Astrocyte of the cerebellum (primary cell): ENCODE measurements at regions of chr12 and their contacts with region 1.

Region 1: DNA sequence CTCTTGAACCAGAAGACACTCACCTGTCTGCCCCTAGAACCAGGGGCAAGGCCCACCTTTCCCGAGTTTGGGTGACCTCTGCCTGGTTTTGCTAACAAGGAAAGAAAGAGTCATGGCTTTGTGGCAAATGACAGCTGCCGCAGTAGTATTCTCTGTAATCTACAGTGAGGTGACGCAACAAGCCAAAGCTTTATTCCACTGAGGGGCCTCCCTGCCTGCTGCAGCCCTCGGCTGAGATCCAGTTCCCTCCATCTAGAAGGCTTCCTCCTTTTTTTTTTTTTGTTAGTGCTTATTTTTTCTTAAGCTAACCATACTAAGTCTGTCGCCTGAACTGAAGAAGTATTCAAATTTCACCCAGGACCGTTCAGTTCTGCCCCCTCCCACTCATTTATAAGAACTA is 142.3 kb upstream of the TMCC3 start:
- DNase-seq: no peak
- H3K4me3 ChIP-seq: no peak overlapping the region
- CTCF ChIP-seq: no peak

Region 2: DNA sequence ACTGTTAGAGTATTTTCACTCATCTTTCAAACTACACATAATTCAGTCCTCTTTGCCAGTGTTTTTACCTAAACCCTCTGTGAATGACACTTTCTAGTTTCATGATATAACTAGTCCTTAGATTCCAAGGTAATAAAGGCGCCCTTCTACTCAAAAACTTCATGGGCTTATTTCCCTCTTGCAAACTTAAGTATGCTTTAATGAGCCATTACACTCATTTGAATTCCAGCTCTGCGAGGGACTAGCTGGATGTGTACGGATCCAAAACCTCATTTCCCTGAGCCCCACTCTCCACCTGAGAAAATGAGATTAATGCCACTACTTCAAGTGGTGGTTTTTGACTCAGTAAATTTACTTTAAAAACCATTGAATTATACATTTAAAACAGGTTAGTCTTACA is 69.7 kb after region 1 on chr12:
- in situ Hi-C with region 1: no loop called
- DNase-seq: no peak
- H3K4me3 ChIP-seq: no peak overlapping the region
- CTCF ChIP-seq: no peak

Region 3: DNA sequence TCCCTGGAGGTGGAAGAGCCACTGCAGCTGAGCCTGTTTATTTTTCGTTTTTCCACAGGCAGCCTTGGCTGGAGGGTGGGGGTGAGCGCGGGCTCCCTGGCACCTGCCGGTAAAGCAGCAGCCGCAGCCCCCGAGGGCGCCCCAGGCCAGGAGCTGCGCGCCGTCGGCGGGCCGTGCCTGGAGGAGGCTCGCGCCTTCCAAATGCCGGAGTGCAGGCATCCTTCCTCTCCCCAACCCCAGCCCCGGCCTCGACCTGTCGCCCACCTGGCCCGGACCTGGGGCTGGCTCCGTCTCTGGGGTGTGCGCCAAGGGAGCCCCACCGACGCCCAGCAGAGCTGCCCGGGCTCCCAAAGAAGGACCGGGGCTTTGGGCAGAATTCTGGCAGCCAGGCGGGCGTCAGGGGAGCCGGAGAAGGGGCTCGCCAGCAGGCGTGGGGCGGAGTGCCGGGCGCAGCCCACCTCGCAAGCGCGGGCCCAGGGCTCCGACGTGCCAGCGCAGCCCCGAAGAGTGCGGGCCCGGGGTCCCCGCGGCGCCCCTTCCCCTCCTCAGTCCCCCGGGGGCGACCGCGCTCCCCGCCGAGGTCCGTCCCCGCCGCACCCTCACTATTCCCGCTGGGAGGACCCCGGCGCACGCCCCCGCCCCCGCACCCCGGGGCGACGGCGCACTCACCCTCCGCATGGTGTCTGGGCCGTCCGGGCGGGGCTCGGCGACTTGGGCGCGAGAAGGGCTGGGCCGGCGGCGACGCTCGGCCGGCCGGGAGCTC is 80.5 kb after region 1 on chr12:
- in situ Hi-C with region 1: loop called (anchors 5 kb)
- DNase-seq: no peak
- H3K4me3 ChIP-seq: peak overlapping the region; percentile 14
- CTCF ChIP-seq: no peak